ENCODE measurements at regions of chr2 and their contacts with region 1.

Region 1: GRCh38 chr2:219543601-219544358 is at the starts of genes CHPF and TMEM198:
- DNase-seq: peak; percentile 98
- H3K4me3 Mint-ChIP-seq: peak within 1 kb of the TSS; percentile 92
- H3K27ac Mint-ChIP-seq: peak within 1 kb of the TSS; percentile 65
- H3K4me1 Mint-ChIP-seq: peaks cover 22% of the 10 kb centered on the region
- H3K27me3 Mint-ChIP-seq: peaks cover 5% of the 10 kb centered on the region
- total RNA-seq, gene CHPF: 19.9 to 21.0 TPM
- total RNA-seq, gene TMEM198: 2.6 to 4.4 TPM

Region 2: GRCh38 chr2:219441451-219442255 is 102.1 kb before region 1 on chr2:
- CTCF ChIA-PET with region 1: interaction called, 11 read pairs
- POLR2A ChIA-PET with region 1: no interaction called
- intact Hi-C with region 1: no loop called
- DNase-seq: peak; percentile 60
- H3K4me3 Mint-ChIP-seq: peak overlapping the region; percentile 63
- H3K27ac Mint-ChIP-seq: no peak overlapping the region
- H3K4me1 Mint-ChIP-seq: peaks cover 11% of the 10 kb centered on the region
- H3K27me3 Mint-ChIP-seq: peaks cover 20% of the 10 kb centered on the region

Region 3: GRCh38 chr2:219560037-219560892 is 16.5 kb after region 1 on chr2:
- CTCF ChIA-PET with region 1: interaction called, 73 read pairs
- POLR2A ChIA-PET with region 1: no interaction called
- intact Hi-C with region 1: no loop called
- DNase-seq: peak; percentile 21
- H3K4me3 Mint-ChIP-seq: no peak overlapping the region
- H3K27ac Mint-ChIP-seq: no peak overlapping the region
- H3K4me1 Mint-ChIP-seq: no peaks in the 10 kb centered on the region
- H3K27me3 Mint-ChIP-seq: peaks cover 15% of the 10 kb centered on the region

Region 4: GRCh38 chr2:219597552-219598307 is 54.0 kb after region 1 on chr2 and contains the start of gene STK11IP:
- CTCF ChIA-PET with region 1: interaction called, 21 read pairs
- POLR2A ChIA-PET with region 1: interaction called, 8 read pairs
- intact Hi-C with region 1: loop called (anchors 1 kb)
- DNase-seq: peak; percentile 96
- H3K4me3 Mint-ChIP-seq: peak within 1 kb of the TSS; percentile 88
- H3K27ac Mint-ChIP-seq: peak within 1 kb of the TSS; percentile 93
- H3K4me1 Mint-ChIP-seq: peaks cover 10% of the 10 kb centered on the region
- H3K27me3 Mint-ChIP-seq: peaks cover 4% of the 10 kb centered on the region
- total RNA-seq, gene STK11IP: 28.7 to 28.9 TPM

Region 5: GRCh38 chr2:219642465-219643080 is 98.8 kb after region 1 on chr2:
- CTCF ChIA-PET with region 1: interaction called, 47 read pairs
- POLR2A ChIA-PET with region 1: no interaction called
- intact Hi-C with region 1: loop called (anchors 1 kb)
- DNase-seq: peak; percentile 93
- H3K4me3 Mint-ChIP-seq: no peak overlapping the region
- H3K27ac Mint-ChIP-seq: no peak overlapping the region
- H3K4me1 Mint-ChIP-seq: peaks cover 7% of the 10 kb centered on the region
- H3K27me3 Mint-ChIP-seq: peaks cover 9% of the 10 kb centered on the region

Measured in activated CD4-positive, alpha-beta memory T cell treated with anti-CD3 and anti-CD28 coated beads for 36 hours (primary cell).